Uterus (tissue), 4 donors: ENCODE measurements at regions of chr14 and their contacts with region 1.

Region 1: GRCh38 chr14:90399541-90400444 is 3.0 kb downstream of the CALM1 start:
- DNase-seq: peak; percentile 85 to 91
- H3K4me3 ChIP-seq: no peak overlapping the region
- H3K27ac ChIP-seq: peak overlapping the region; percentile 90 to 95
- H3K4me1 ChIP-seq: no peaks in the 10 kb centered on the region
- H3K27me3 ChIP-seq: peaks cover 0 to 3% of the 10 kb centered on the region in 2 donors
- CTCF ChIP-seq: peak; percentile 97 to 98 (median 97)
- POLR2A ChIP-seq: no peak

Region 2: DNA sequence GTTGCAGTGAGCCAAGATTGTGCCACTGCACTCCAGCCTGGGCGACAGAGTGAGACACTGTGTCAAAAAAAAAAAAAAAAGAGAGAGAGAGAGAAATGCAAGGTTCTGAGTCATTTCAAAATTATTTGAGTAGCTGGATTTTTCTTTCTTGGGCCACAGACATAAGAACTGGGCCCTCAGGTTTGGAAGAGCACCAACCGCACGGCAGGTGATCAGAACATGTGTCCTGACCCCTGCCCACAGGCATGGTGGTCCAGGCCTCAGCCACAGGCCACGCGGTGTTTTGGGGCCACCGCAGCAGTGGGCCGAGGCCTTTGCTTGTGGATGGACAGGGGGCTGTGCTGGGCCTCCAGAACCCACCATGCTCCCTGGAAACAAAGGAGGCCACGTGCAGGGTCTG is 123.8 kb after region 1 on chr14:
- intact Hi-C with region 1: no loop called
- DNase-seq: no peak
- H3K4me3 ChIP-seq: no peak overlapping the region
- H3K27ac ChIP-seq: peak overlapping the region in 1 of 2 donors; percentile 28
- H3K4me1 ChIP-seq: peaks cover 11 to 20% of the 10 kb centered on the region in 2 donors
- H3K27me3 ChIP-seq: no peaks in the 10 kb centered on the region
- CTCF ChIP-seq: no peak
- POLR2A ChIP-seq: no peak

Region 3: DNA sequence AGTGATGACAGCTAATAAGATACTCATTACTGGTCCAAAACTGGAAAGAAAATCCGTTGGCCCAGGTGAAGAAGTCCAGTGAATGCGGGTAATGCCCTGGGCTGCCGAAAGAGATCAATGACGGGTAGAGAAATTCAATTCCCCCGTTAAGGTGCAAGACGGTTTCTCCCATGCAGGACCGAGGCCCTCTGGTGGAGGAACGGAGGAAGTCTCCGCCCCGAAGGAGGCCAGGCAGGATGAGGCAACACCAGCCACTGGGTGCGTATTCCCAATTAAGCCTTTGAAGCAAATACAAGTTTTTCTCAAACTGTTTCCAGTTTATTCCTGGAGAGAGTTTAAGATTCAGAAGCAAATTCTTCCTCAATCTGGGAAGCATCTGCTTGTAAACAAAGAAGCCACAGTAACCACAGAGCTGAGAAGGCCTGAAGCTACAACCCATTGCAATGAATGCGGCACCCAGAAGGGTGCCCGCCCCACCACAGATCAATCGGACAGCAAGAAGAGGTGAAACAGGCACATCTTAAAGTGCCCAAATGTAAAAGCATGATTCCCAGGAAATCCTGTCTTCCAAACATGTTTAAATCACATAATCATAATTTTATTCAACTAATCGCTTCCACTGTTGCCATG is 297.9 kb after region 1 on chr14:
- intact Hi-C with region 1: loop called (anchors 10 kb)
- DNase-seq: peak; percentile 85
- H3K4me3 ChIP-seq: no peak overlapping the region
- H3K27ac ChIP-seq: peak overlapping the region; percentile 32 to 75
- H3K4me1 ChIP-seq: peaks cover 0 to 10% of the 10 kb centered on the region in 2 donors
- H3K27me3 ChIP-seq: no peaks in the 10 kb centered on the region
- CTCF ChIP-seq: peak; percentile 89 to 95 (median 90)
- POLR2A ChIP-seq: peak in 1 of 2 donors; percentile 6

Region 4: GRCh38 chr14:90758028-90758889 is 358.5 kb after region 1 on chr14:
- intact Hi-C with region 1: loop called (anchors 10 kb)
- DNase-seq: peak; percentile 88 to 95
- H3K4me3 ChIP-seq: peak overlapping the region; percentile 43 to 56
- H3K27ac ChIP-seq: peak overlapping the region; percentile 85 to 99
- H3K4me1 ChIP-seq: no peaks in the 10 kb centered on the region
- H3K27me3 ChIP-seq: no peaks in the 10 kb centered on the region
- CTCF ChIP-seq: peak; percentile 86 to 96 (median 94)
- POLR2A ChIP-seq: peak; percentile 46 to 58